H1 (cell line): ENCODE measurements at regions of chr9 and their contacts with region 1.

Region 1: DNA sequence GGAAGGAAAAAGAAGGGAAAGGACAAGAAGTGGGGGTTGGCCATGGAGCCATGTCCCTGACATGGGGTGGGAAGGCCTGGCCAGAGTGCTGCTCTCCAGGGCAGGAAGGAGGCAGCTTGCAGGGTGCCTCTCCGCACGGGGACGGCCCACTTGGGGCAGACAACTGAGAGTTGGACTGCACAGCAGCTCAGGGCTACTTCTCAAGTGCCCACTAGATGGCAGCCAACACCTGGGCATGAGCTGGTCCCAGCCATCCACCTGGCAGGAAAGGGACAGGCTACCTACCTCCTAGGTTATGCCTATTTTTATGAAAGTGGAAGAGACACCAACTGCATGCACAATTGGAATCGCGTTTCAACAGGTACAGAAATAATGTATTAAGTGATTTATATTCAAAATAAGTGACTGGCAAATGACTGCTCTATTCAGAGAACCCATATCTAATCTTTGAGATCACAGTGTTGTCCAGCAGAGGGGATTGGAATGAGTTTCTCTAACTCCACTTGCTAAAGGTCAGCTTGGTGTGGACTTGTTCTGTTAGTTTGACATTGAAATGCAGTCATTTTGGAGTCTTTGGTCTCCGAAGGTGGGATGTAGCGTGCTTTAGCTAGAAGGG is 113.4 kb downstream of the SYK start:
- DNase-seq: peak; percentile 54 to 79
- H3K4me3 ChIP-seq: no peak overlapping the region
- H3K27ac ChIP-seq: no peak overlapping the region
- H3K4me1 ChIP-seq: no peaks in the 10 kb centered on the region
- H3K27me3 ChIP-seq: no peaks in the 10 kb centered on the region
- CTCF ChIP-seq: peak; percentile 83 to 93 (median 92)
- EP300 ChIP-seq: no peak
- POLR2A ChIP-seq: no peak
- RAD21 ChIP-seq: peak; percentile 97 to 98

Region 2: DNA sequence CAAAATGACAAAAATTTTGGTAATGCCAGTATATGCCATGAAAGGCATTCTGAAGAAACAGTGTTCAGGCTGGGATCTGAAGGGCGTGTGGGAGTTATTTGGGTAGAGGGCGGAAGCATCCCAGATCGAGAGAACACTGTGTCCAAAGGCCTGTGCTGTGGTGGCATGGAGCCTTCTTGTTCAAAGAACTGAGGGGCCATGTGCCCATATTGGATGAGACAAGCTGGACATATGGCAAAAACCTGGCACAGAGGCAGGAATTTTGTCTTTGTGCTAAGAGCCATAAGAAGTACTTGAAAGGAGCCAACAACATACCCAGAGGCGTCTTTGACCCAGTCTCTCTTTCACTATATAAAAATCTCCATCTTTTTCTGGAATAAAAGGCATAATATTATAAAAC is 14.7 kb after region 1 on chr9:
- CTCF ChIA-PET with region 1: interaction called, 12 read pairs
- POLR2A ChIA-PET with region 1: no interaction called
- DNase-seq: no peak
- H3K4me3 ChIP-seq: no peak overlapping the region
- H3K27ac ChIP-seq: no peak overlapping the region
- H3K4me1 ChIP-seq: no peaks in the 10 kb centered on the region
- H3K27me3 ChIP-seq: no peaks in the 10 kb centered on the region
- CTCF ChIP-seq: no peak
- EP300 ChIP-seq: no peak
- POLR2A ChIP-seq: no peak
- RAD21 ChIP-seq: no peak

Region 3: GRCh38 chr9:90956026-90956810 is 41.2 kb after region 1 on chr9:
- CTCF ChIA-PET with region 1: interaction called, 23 read pairs
- POLR2A ChIA-PET with region 1: no interaction called
- DNase-seq: no peak
- H3K4me3 ChIP-seq: no peak overlapping the region
- H3K27ac ChIP-seq: no peak overlapping the region
- H3K4me1 ChIP-seq: no peaks in the 10 kb centered on the region
- H3K27me3 ChIP-seq: no peaks in the 10 kb centered on the region
- CTCF ChIP-seq: no peak
- EP300 ChIP-seq: no peak
- POLR2A ChIP-seq: no peak
- RAD21 ChIP-seq: no peak

Region 4: GRCh38 chr9:91001146-91001611 is 86.2 kb after region 1 on chr9:
- CTCF ChIA-PET with region 1: interaction called, 10 read pairs
- POLR2A ChIA-PET with region 1: no interaction called
- DNase-seq: no peak
- H3K4me3 ChIP-seq: no peak overlapping the region
- H3K27ac ChIP-seq: no peak overlapping the region
- H3K4me1 ChIP-seq: peaks cover 0 to 4% (median 0%) of the 10 kb centered on the region in 4 experiments; a peak in 1 of 7 replicates
- H3K27me3 ChIP-seq: no peaks in the 10 kb centered on the region
- CTCF ChIP-seq: no peak
- EP300 ChIP-seq: no peak
- POLR2A ChIP-seq: no peak
- RAD21 ChIP-seq: no peak

Region 5: DNA sequence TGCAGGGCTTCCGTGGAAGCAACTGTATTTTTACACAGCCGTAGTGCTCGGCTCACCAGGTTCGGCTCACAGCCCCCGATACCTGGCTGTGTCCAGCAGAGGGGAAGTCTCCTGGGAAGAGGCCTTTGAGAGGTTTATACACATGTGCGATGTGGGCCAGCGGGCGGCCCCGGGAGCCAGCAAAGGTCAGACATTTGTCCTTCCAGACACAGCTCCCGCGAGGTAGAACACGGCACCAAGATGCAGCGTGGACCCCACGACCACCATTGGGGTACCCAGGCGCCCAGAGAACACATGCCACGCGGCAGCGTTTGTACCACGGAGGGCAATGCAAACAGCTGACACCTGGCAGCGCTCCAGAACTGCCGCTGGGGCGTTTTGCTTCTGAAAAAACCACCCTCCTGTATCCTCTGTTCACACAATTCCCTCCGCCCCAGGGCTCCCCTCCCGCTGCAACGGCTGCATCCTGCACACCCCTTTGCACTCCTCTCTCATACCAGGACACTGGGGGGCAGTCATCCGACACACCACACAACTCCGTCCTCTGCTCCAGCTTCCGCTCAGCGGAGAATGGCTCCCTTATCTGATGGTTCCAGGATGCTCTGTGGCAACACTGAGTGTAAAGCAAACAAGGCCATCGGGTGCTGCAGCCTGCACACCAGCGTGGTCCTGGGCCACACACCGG is 122.0 kb after region 1 on chr9:
- CTCF ChIA-PET with region 1: interaction called, 68 read pairs
- POLR2A ChIA-PET with region 1: no interaction called
- DNase-seq: peak; percentile 44 to 80
- H3K4me3 ChIP-seq: no peak overlapping the region
- H3K27ac ChIP-seq: no peak overlapping the region
- H3K4me1 ChIP-seq: peaks cover 0 to 2% (median 0%) of the 10 kb centered on the region in 4 experiments; a peak in 1 of 7 replicates
- H3K27me3 ChIP-seq: no peaks in the 10 kb centered on the region
- CTCF ChIP-seq: peak; percentile 66 to 72 (median 72)
- EP300 ChIP-seq: no peak
- POLR2A ChIP-seq: no peak
- RAD21 ChIP-seq: peak; percentile 87 to 88

Region 6: DNA sequence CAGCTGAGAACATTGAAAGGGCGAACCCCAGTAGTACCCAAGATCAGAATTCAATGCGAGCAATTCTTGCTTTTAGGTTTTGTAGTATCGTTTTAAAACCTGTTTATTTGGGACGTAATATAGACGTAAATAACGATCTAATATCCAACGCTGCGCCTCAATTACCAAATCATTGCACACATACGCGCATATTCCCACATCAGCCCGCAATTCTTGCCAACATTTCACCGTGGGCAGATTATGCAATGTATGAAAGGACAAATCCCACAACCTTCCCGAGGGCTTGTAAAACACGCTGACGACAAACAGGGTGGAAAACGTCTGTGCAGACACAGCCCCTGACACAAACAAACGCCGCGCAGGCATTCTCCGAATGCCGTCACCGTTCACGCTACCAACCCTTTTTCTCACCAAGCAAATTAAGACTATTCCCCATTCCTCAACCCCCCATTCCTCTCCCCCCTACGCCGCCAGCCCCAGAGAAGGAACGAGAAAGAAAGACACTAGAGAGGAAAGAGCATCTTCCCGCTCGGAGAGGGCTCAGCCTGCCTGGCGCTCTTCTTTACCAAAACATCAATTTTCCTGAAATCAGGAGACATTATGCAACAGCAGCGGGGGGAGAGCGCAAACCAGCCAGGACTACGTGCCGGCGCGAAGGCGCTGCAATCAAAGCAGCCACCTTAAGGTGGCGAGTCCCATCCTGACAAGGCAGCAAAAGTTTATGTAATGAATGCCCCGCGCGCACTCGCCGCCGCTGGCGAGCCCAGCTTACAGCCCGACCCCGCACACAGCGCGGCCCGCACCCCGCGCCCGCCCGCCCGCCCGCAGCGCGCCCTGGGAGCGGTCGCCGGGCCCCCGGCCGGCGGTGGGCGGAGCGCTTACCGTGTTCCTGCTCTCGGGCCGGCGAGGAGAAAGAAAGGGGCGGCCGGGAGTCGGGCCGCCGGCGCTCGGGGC is 508.1 kb after region 1 on chr9:
- CTCF ChIA-PET with region 1: interaction called, 17 read pairs
- POLR2A ChIA-PET with region 1: no interaction called
- DNase-seq: peak in 1 of 2 experiments; percentile 72
- H3K4me3 ChIP-seq: peak overlapping the region; percentile 58 to 97 (median 82)
- H3K27ac ChIP-seq: 0 out of 2 replicates have a peak overlapping the region, but pooled peaks have one; percentile 33
- H3K4me1 ChIP-seq: peaks cover 2 to 9% (median 4%) of the 10 kb centered on the region in 4 experiments; a peak in 4 of 7 replicates
- H3K27me3 ChIP-seq: peaks cover 2 to 45% (median 30%) of the 10 kb centered on the region in 4 experiments
- CTCF ChIP-seq: peak in 2 of 3 experiments; percentile 24 to 34; a peak in 2 of 4 replicates
- EP300 ChIP-seq: no peak
- POLR2A ChIP-seq: no peak
- RAD21 ChIP-seq: peak in 1 of 2 experiments; percentile 5; a peak in 1 of 4 replicates

Region 7: DNA sequence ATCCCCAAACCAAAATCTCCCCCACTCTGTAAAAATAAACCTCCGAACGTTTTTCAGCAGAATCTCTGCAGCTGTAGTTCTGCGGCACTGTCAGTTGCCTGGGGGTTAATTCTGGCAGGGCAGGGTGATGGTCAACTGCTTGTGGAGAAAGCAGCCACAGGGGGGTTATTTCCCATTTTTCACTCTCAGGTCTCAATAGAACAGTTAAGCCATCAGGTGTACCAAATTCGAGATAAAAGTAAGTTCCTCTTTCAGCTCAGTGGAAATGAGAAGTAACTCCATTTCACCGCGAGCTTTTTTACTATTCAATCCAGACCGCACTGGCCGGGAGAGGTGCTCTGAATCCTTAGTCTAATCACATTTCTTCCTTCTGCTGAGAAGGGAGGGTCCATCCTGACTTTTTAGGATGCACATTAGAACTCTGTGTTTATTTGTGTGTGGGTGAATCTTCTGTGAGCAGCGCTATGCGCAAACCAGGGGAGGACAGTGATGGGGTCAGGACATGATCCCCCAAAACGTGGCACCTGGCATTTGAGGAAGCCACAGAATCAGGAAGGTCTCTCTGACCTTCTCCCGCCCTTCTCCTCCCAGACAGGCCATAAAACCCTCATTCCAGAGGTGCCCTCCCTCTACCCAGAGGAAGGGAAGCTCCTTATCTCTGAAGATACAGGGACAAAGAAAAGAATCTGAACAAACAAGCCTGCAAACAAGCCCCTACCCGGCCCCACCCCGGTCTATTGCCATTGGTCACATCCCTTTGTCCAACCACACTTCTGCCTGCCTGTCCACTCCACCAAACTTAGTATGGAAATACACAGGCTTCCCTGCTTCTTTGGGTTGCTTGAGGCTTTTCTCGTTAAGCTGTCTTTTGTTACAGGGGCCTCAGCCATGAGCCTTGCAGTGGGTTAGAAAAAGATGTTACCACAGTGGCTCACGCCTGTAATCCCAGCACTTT is 806.1 kb after region 1 on chr9:
- CTCF ChIA-PET with region 1: interaction called, 13 read pairs
- POLR2A ChIA-PET with region 1: interaction called, 3 read pairs
- DNase-seq: no peak
- H3K4me3 ChIP-seq: no peak overlapping the region
- H3K27ac ChIP-seq: no peak overlapping the region
- H3K4me1 ChIP-seq: peaks cover 0 to 4% (median 0%) of the 10 kb centered on the region in 4 experiments; a peak in 1 of 7 replicates
- H3K27me3 ChIP-seq: no peaks in the 10 kb centered on the region
- CTCF ChIP-seq: no peak
- EP300 ChIP-seq: no peak
- POLR2A ChIP-seq: no peak
- RAD21 ChIP-seq: no peak